GM10248 (cell line): ENCODE measurements at regions of chr7 and their contacts with region 1.

Region 1: GRCh38 chr7:130084037-130084875 is 13.9 kb downstream of the KLHDC10 start:
- DNase-seq: no peak
- CTCF ChIP-seq: peak; percentile 20

Region 2: DNA sequence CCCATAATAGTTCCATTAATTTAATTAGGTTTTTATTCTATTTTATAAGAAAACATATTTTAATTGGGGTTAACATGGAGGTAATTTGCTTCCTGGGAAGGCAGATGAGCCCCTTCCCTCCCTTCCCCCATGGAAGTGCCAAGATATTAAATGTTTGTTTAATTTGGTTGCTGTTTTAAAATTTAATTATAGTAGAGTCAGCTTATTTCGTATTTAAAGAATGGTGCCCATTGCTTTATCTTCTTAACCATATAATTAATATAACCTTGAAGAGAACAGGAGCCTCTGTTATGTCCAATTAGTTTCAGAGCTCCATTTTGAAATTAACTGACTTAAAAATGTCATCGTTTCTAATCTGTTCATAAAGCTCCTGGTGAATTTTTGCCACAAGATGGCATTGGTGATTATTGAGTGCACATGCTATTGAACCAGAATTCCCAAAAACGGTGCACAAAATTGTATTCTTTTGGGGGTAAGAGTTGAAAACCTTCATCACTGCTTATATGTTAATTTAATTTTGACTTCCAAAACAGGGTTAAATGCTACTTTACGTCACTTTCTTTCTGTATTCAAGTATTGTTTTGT is 12.1 kb after region 1 on chr7:
- CTCF ChIA-PET with region 1: interaction called, 12 read pairs
- POLR2A ChIA-PET with region 1: no interaction called
- DNase-seq: no peak
- CTCF ChIP-seq: no peak

Region 3: DNA sequence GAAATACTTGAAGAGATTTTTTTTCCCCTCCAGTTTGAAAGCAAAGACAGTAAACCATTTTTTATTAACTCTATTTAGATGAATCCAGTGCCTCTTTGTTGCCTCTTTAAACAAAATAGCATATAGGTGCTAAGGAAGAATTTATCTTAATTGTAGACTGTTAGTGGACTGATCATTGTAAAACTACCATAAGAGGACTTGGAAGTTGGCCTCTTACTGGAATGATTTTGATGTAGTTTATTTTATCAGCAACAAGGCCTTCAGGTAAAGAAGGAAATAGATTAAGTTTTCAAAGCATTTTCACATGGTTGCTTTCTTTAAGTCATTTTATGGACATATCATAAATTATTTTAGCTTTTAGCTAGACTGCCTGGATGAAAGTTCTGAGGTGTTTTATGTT is 39.2 kb after region 1 on chr7:
- CTCF ChIA-PET with region 1: no interaction called
- POLR2A ChIA-PET with region 1: no interaction called
- DNase-seq: no peak
- CTCF ChIP-seq: no peak

Region 4: DNA sequence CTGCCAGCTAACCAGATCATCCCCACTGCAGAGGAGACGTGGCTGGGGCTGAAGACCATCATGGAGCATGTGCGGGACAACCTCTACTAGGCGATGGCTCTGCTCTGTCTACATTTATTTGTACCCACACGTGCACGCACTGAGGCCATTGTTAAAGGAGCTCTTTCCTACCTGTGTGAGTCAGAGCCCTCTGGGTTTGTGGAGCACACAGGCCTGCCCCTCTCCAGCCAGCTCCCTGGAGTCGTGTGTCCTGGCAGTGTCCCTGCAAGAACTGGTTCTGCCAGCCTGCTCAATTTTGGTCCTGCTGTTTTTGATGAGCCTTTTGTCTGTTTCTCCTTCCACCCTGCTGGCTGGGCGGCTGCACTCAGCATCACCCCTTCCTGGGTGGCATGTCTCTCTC is 238.3 kb after region 1 on chr7:
- CTCF ChIA-PET with region 1: no interaction called
- POLR2A ChIA-PET with region 1: no interaction called
- DNase-seq: no peak
- CTCF ChIP-seq: no peak